Calu3 (cell line): ENCODE measurements at regions of chr2 and their contacts with region 1.

Region 1: DNA sequence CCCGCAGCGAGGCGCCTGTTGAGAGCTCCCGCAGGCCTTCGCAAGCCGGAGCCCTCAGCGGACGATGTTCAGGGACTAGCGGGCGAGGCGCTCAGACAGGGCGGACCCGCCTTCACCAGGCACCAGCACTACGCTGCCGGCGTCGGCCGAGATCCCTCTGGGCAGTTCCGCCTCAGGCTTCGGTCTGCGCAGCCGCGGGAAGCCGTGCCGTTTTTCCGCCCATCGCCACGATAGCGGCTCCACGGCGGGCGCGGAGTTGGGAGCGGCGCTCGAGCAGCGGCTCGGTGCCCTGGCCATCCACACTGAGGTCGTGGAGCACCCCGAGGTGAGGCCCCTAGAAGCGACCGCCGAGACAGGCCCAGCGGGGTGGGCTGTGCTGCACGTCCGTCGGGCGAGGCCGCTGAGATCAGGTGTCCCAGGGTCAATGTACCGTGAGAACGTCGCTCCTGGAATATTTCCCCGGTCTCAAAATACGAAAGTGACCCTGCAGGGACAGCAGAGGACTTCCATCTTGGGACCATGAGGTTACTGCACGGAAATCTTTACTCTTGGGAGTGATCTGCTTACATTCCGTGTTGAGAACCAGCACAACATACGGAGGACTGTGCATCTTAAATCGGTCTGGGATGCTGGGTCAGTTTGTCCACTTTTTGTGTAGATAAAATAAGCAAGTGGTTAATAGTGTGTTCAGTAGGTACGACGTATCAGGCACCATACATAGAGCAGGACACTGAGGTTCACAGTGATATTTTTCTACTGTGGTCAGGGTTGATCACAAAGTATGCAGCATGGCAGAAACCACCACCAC is 13.3 kb upstream of the MTIF2 start:
- DNase-seq: peak; percentile 85
- H3K4me3 Mint-ChIP-seq: peak overlapping the region; percentile 84
- H3K27ac Mint-ChIP-seq: peak overlapping the region; percentile 89
- H3K4me1 Mint-ChIP-seq: peaks cover 17% of the 10 kb centered on the region
- H3K27me3 Mint-ChIP-seq: no peaks in the 10 kb centered on the region
- CTCF ChIP-seq: no peak

Region 2: DNA sequence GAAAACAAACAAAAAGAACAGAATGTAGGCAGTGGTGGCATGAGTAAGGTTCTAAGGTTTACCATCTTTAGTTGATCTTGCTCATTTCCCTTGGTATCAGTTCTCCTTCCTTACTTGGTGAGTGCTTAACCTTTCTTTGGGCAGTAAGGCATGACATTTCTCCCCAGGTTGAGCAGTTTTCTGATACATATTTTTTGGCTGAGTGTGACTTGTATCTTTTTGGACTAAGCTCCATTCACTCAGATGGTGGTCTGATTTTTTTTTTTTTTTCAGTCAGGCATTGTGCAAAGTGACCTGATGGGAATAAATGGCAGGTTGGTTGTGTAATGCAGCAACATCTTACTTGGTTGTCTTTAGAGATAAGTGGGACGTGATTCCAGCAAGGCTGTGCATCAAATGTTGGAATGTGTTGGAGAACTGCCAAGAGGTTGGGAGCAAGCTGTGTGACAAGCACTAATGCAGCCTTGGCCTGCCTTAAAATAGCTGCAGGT is 811.0 kb before region 1 on chr2:
- CTCF ChIA-PET with region 1: no interaction called
- intact Hi-C with region 1: no loop called
- DNase-seq: peak; percentile 28
- H3K4me3 Mint-ChIP-seq: no peak overlapping the region
- H3K27ac Mint-ChIP-seq: no peak overlapping the region
- H3K4me1 Mint-ChIP-seq: peaks cover 16% of the 10 kb centered on the region
- H3K27me3 Mint-ChIP-seq: no peaks in the 10 kb centered on the region
- CTCF ChIP-seq: no peak

Region 3: DNA sequence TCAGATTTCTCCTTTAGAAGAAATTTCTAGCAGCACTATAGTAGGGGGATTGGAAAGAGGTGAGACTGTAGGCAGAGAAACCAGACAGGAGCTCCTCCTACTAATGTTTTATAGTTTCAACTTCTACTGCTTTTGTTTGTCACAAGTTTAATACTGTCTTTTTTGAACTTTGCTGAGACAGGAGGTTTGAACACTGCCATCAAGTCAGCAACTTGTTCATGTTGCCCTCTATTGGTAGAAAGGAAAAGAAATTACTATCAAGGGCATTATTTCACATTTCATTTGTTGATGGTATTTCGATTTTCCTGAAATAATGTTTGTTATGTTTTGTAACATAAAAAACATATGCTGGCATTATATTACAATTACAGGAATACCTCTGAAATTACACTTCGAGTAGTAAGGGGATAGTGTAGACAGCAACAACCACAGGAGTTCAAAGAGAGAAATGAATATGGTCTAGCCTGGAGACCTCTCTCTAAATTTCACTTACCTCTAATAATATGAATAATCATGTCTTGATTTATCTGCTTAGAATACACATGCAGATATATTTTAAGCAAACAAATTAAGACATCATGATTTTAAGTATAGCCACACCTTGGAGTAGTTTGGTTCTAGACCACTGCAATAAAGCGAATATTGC is 149.8 kb after region 1 on chr2:
- CTCF ChIA-PET with region 1: no interaction called
- intact Hi-C with region 1: loop called (anchors 5 kb)
- DNase-seq: no peak
- H3K4me3 Mint-ChIP-seq: no peak overlapping the region
- H3K27ac Mint-ChIP-seq: no peak overlapping the region
- H3K4me1 Mint-ChIP-seq: peaks cover 8% of the 10 kb centered on the region
- H3K27me3 Mint-ChIP-seq: no peaks in the 10 kb centered on the region
- CTCF ChIP-seq: peak; percentile 25

Region 4: GRCh38 chr2:55519938-55520885 is 237.9 kb after region 1 on chr2:
- CTCF ChIA-PET with region 1: no interaction called
- intact Hi-C with region 1: loop called (anchors 10 kb)
- DNase-seq: peak; percentile 23
- H3K4me3 Mint-ChIP-seq: peak overlapping the region; percentile 94
- H3K27ac Mint-ChIP-seq: peak overlapping the region; percentile 94
- H3K4me1 Mint-ChIP-seq: peaks cover 9% of the 10 kb centered on the region
- H3K27me3 Mint-ChIP-seq: no peaks in the 10 kb centered on the region
- CTCF ChIP-seq: no peak